ENCODE measurements at regions of chr9 and their contacts with region 1.

Region 1: GRCh38 chr9:121992571-121993212 is 100.4 kb downstream of the TTLL11 start:
- DNase-seq: peak; percentile 82
- ATAC-seq: peak; percentile 88
- H3K4me3 ChIP-seq: no peak overlapping the region
- H3K27ac ChIP-seq: no peak overlapping the region
- H3K4me1 ChIP-seq: peaks cover 5% of the 10 kb centered on the region; the same call in 1 of the 2 replicates
- H3K27me3 ChIP-seq: no peaks in the 10 kb centered on the region
- CTCF ChIP-seq: peak; percentile 84
- POLR2A ChIP-seq: no peak
- RAD21 ChIP-seq: peak; percentile 89

Region 2: GRCh38 chr9:121350993-121351561 is 641.6 kb before region 1 on chr9:
- CTCF ChIA-PET with region 1: no interaction called
- POLR2A ChIA-PET with region 1: no interaction called
- dilution Hi-C with region 1: no loop called
- in situ Hi-C with region 1: no loop called
- intact Hi-C with region 1: no loop called
- DNase-seq: peak; percentile 92
- ATAC-seq: peak; percentile 69
- H3K4me3 ChIP-seq: no peak overlapping the region
- H3K27ac ChIP-seq: peak overlapping the region; percentile 73
- H3K4me1 ChIP-seq: peaks cover 28% of the 10 kb centered on the region
- H3K27me3 ChIP-seq: no peaks in the 10 kb centered on the region
- CTCF ChIP-seq: no peak
- POLR2A ChIP-seq: no peak
- RAD21 ChIP-seq: no peak; the same call in 1 of the 2 replicates

Region 3: GRCh38 chr9:121634329-121635261 is 358.1 kb before region 1 on chr9:
- CTCF ChIA-PET with region 1: no interaction called
- POLR2A ChIA-PET with region 1: no interaction called
- dilution Hi-C with region 1: no loop called
- in situ Hi-C with region 1: no loop called
- intact Hi-C with region 1: no loop called
- DNase-seq: peak; percentile 13
- ATAC-seq: peak; percentile 72
- H3K4me3 ChIP-seq: no peak overlapping the region
- H3K27ac ChIP-seq: no peak overlapping the region
- H3K4me1 ChIP-seq: peaks cover 11% of the 10 kb centered on the region; the same call in 1 of the 2 replicates
- H3K27me3 ChIP-seq: no peaks in the 10 kb centered on the region
- CTCF ChIP-seq: peak; percentile 56
- POLR2A ChIP-seq: no peak
- RAD21 ChIP-seq: peak; percentile 65

Region 4: DNA sequence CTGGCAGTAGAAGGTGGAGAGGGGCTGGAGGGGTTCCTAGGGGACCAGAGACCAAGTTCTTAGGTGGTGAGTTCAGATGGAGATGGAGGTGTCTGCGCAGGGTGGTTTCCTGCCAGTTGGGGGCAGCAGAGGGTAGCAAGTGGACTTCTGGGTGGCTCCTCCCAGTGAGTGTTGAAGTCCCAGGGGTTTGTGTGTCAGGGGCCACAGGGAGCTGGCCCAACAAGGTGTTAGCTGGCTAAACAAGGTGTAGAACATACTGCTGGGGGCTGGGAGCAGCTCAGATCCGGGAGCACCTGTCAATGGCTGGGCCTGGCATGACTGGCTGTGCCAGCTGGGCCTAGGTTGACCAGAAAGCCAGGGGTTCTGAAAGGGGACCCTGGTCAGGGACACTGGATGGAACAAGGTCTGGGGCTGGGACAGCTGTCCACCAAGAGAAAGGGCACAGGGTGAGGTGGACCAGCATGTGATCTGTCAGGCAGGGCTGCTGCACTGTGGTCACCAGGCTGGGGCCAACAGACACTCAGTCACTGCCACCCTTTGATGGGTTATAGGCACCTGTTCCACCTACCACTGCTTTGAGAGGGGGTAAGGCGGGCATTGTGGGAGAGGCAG is 305.7 kb before region 1 on chr9:
- CTCF ChIA-PET with region 1: interaction called, 6 read pairs
- POLR2A ChIA-PET with region 1: no interaction called
- dilution Hi-C with region 1: no loop called
- in situ Hi-C with region 1: loop called (anchors 5 kb)
- intact Hi-C with region 1: loop called (anchors 1 kb)
- DNase-seq: peak; percentile 65
- ATAC-seq: peak; percentile 92
- H3K4me3 ChIP-seq: no peak overlapping the region
- H3K27ac ChIP-seq: no peak overlapping the region
- H3K4me1 ChIP-seq: peaks cover 5% of the 10 kb centered on the region; the same call in 1 of the 2 replicates
- H3K27me3 ChIP-seq: no peaks in the 10 kb centered on the region
- CTCF ChIP-seq: peak; percentile 92
- POLR2A ChIP-seq: no peak
- RAD21 ChIP-seq: peak; percentile 96

Region 5: GRCh38 chr9:121700163-121700831 is 292.4 kb before region 1 on chr9:
- CTCF ChIA-PET with region 1: interaction called, 5 read pairs
- POLR2A ChIA-PET with region 1: no interaction called
- dilution Hi-C with region 1: no loop called
- in situ Hi-C with region 1: no loop called
- intact Hi-C with region 1: loop called (anchors 2 kb)
- DNase-seq: peak; percentile 48
- ATAC-seq: peak; percentile 36
- H3K4me3 ChIP-seq: peak overlapping the region; percentile 60
- H3K27ac ChIP-seq: no peak overlapping the region
- H3K4me1 ChIP-seq: peaks cover 8% of the 10 kb centered on the region
- H3K27me3 ChIP-seq: no peaks in the 10 kb centered on the region
- CTCF ChIP-seq: peak; percentile 61
- POLR2A ChIP-seq: no peak
- RAD21 ChIP-seq: peak; percentile 64

Region 6: GRCh38 chr9:121744002-121744686 is 248.5 kb before region 1 on chr9:
- CTCF ChIA-PET with region 1: no interaction called
- POLR2A ChIA-PET with region 1: no interaction called
- dilution Hi-C with region 1: no loop called
- in situ Hi-C with region 1: no loop called
- intact Hi-C with region 1: loop called (anchors 2 kb)
- DNase-seq: peak; percentile 43
- ATAC-seq: peak; percentile 22
- H3K4me3 ChIP-seq: peak overlapping the region; percentile 43
- H3K27ac ChIP-seq: peak overlapping the region; percentile 71
- H3K4me1 ChIP-seq: peaks cover 35% of the 10 kb centered on the region
- H3K27me3 ChIP-seq: no peaks in the 10 kb centered on the region
- CTCF ChIP-seq: peak; percentile 46
- POLR2A ChIP-seq: no peak
- RAD21 ChIP-seq: peak; percentile 56

Region 7: DNA sequence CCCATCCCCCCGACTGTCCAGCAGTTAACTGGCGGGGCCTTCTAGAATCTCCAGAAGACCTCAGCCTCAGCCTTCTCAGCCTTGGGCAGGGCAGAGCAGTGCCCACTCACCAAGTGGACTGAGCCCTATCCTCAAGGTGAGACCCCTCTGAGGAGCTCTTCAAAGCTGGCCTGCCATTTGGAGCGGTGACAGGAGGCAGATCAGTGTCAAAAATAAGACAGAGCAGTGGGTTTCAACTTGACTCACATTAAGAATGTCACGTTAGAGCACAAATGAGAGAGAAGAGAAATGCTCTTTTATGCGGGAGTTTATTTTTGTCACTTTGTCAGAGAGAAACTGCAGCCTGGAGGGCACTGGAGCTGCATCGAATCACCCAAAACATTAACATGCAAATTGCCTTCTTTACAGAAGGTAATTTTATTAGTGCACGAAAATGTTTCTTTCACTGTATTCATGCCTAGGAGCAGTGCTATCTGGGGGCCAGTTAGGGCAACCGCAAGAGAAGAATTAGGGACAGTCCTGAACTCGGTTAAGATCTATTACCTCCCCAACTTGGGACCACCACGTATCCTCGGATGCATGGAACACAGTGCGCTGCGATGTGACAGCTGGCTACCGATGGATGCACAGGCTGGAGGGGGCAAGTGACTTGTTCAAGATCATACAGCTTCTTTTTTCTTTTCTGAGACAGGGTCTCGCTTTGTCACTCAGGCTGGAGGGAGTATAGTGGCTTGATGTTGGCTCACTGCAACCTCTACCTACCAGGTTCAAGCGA is 152.8 kb before region 1 on chr9:
- CTCF ChIA-PET with region 1: no interaction called
- POLR2A ChIA-PET with region 1: no interaction called
- dilution Hi-C with region 1: no loop called
- in situ Hi-C with region 1: no loop called
- intact Hi-C with region 1: no loop called
- DNase-seq: no peak
- ATAC-seq: no peak
- H3K4me3 ChIP-seq: no peak overlapping the region
- H3K27ac ChIP-seq: no peak overlapping the region
- H3K4me1 ChIP-seq: peaks cover 32% of the 10 kb centered on the region
- H3K27me3 ChIP-seq: no peaks in the 10 kb centered on the region
- CTCF ChIP-seq: no peak
- POLR2A ChIP-seq: no peak
- RAD21 ChIP-seq: no peak

Region 8: DNA sequence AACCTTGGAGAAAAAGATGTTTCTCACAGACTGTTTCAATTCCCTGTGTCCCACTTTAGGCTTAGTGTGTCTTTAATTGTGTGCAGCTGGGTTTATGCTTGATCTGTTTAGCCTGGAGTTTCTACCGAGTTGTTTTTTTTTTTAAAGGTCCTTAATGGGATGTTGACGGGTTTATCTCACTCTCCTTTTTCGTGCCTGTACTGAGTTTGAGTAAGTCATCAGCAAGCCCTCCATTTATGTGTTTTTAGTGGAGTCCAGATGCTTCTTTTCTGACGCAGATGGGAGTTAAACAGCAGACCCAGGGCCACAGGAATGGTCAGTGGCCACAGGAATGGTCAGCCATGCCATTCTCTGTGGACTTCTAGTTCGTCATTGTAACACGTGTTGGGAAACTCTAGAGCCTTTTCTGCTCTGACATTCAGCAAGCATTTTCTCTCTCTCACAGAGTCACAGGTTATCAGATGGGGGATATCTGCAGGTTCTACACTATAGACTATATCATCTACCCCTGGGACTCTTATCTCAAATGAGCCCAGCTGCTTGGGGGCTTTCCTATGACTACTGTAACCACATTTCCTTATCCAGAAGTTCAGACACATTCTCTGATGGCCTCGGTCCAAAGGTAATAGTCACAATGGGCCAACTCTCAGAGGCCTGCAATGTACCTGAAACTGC is 90.1 kb before region 1 on chr9:
- CTCF ChIA-PET with region 1: interaction called, 3 read pairs
- POLR2A ChIA-PET with region 1: no interaction called
- dilution Hi-C with region 1: no loop called
- in situ Hi-C with region 1: no loop called
- intact Hi-C with region 1: loop called (anchors 5 kb)
- DNase-seq: peak; percentile 100
- ATAC-seq: peak; percentile 97
- H3K4me3 ChIP-seq: no peak overlapping the region
- H3K27ac ChIP-seq: peak overlapping the region; percentile 79; the same call in 1 of the 2 replicates
- H3K4me1 ChIP-seq: peaks cover 14% of the 10 kb centered on the region
- H3K27me3 ChIP-seq: no peaks in the 10 kb centered on the region
- CTCF ChIP-seq: no peak
- POLR2A ChIP-seq: no peak
- RAD21 ChIP-seq: peak; percentile 16; the same call in 1 of the 2 replicates

Region 9: DNA sequence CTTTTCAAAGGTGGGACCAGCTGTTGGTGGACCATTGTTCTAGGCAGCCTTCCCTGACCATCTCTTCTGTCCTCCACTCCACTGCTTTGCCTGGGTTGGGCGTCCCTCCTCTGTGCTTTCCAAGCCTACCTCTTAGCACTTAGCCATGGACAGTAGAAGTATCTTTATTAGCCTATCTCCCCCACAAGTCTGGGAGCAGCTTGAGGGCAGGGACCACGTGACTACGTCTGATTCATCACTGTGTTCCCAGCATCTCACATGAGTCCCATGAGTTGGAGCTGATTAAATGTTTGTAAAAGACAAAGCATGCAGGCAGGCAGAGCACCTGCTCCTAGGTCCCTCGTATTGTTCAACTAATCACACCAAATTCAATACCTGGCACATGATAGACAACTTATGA is 188.0 kb after region 1 on chr9:
- CTCF ChIA-PET with region 1: no interaction called
- POLR2A ChIA-PET with region 1: no interaction called
- dilution Hi-C with region 1: no loop called
- in situ Hi-C with region 1: no loop called
- intact Hi-C with region 1: no loop called
- DNase-seq: peak; percentile 88
- ATAC-seq: peak; percentile 95
- H3K4me3 ChIP-seq: no peak overlapping the region
- H3K27ac ChIP-seq: no peak overlapping the region
- H3K4me1 ChIP-seq: 0 out of 2 replicates have a peak, but pooled peaks cover 4% of the 10 kb centered on the region
- H3K27me3 ChIP-seq: peaks cover 37% of the 10 kb centered on the region
- CTCF ChIP-seq: no peak
- POLR2A ChIP-seq: no peak
- RAD21 ChIP-seq: no peak